ENCODE measurements at regions of chr6 and their contacts with region 1.

Region 1: GRCh38 chr6:137313928-137314855 is 95.0 kb upstream of the IFNGR1 start:
- DNase-seq: peak; percentile 37
- H3K4me3 Mint-ChIP-seq: no peak overlapping the region
- H3K27ac Mint-ChIP-seq: no peak overlapping the region
- H3K4me1 Mint-ChIP-seq: peaks cover 11% of the 10 kb centered on the region
- H3K27me3 Mint-ChIP-seq: no peaks in the 10 kb centered on the region
- CTCF ChIP-seq: peak; percentile 33

Region 2: DNA sequence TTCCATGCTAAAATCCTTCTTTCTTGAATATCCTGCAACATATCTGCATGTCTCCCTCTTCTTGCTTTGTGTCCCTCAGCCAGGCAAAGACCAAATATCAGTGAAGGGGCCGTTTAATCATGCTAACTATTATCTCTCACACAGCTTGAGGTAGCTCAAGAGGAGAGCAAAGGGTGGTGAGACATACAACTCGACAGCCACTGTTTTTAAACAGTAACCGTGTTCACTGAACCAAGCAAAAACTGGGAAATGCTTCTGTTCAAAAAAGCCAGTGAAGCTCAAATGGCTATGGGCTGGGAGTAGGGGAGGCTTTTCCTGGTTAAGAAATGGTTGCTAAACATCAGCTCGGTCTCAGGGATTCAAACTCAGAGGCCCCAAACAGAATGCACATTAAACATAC is 847.4 kb before region 1 on chr6:
- CTCF ChIA-PET with region 1: no interaction called
- intact Hi-C with region 1: no loop called
- DNase-seq: no peak
- H3K4me3 Mint-ChIP-seq: no peak overlapping the region
- H3K27ac Mint-ChIP-seq: no peak overlapping the region
- H3K4me1 Mint-ChIP-seq: peaks cover 4% of the 10 kb centered on the region
- H3K27me3 Mint-ChIP-seq: no peaks in the 10 kb centered on the region
- CTCF ChIP-seq: no peak

Region 3: DNA sequence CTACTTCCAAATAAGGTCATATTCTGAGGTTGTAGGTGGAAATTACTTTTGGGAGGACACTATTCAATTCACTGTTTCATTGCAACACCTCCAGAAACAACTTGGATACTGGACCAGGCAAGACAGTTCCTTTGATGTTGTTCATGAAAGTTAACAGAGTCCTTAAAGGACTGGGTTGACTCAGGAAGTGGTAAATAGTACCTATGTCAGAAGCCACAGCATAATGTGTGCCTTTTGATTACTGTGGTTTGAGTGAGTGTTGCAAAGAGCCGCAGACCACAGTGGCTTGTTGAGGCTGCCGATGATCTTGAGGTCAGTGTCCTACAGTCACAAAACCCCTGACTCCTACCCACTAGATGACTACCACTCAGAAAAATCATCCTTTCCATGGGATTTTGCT is 280.4 kb before region 1 on chr6:
- CTCF ChIA-PET with region 1: no interaction called
- intact Hi-C with region 1: no loop called
- DNase-seq: no peak
- H3K4me3 Mint-ChIP-seq: no peak overlapping the region
- H3K27ac Mint-ChIP-seq: no peak overlapping the region
- H3K4me1 Mint-ChIP-seq: peaks cover 19% of the 10 kb centered on the region
- H3K27me3 Mint-ChIP-seq: no peaks in the 10 kb centered on the region
- CTCF ChIP-seq: no peak

Region 4: GRCh38 chr6:137136065-137136464 is 178.1 kb before region 1 on chr6:
- CTCF ChIA-PET with region 1: no interaction called
- intact Hi-C with region 1: loop called (anchors 5 kb)
- DNase-seq: no peak
- H3K4me3 Mint-ChIP-seq: no peak overlapping the region
- H3K27ac Mint-ChIP-seq: no peak overlapping the region
- H3K4me1 Mint-ChIP-seq: no peaks in the 10 kb centered on the region
- H3K27me3 Mint-ChIP-seq: no peaks in the 10 kb centered on the region
- CTCF ChIP-seq: no peak

Measured in Calu3 (cell line).